Right ventricle myocardium inferior (tissue), 1 donor: ENCODE measurements at regions of chr4 and their contacts with region 1.

Region 1: GRCh38 chr4:168496834-168497233 is at the start of gene PALLD:
- DNase-seq: no peak
- ATAC-seq: peak; percentile 94
- total RNA-seq, gene PALLD: 977 TPM

Region 2: GRCh38 chr4:168241953-168242352 is 254.9 kb before region 1 on chr4:
- intact Hi-C with region 1: no loop called
- DNase-seq: no peak
- ATAC-seq: no peak

Region 3: DNA sequence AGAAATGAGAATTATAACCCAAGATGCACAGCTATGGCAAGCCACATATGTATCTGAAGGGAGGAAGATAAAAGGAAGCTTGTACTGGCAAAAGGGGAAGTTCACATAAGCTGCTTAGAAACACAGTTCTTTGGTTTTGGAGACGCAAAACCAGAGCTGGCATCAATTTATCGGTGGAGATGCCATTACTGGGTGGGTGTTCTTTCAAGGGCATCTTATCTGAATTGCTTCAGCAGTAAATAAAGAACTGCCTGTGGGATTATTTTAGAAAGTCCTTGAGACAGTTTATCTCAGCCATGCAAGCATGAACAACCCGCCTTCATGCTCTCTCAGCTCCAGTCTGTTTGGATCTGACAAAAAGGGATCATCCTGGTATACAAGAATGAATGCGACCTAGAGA is 239.1 kb before region 1 on chr4:
- intact Hi-C with region 1: loop called (anchors 5 kb)
- DNase-seq: no peak
- ATAC-seq: peak; percentile 74

Region 4: GRCh38 chr4:168604496-168605373 is 107.9 kb after region 1 on chr4:
- intact Hi-C with region 1: no loop called
- DNase-seq: no peak
- ATAC-seq: peak; percentile 87